Cardiac septum (tissue), 1 donor: ENCODE measurements at regions of chr5 and their contacts with region 1.

Region 1: GRCh38 chr5:91162534-91163381 is 220.4 kb downstream of the ARRDC3 start:
- DNase-seq: peak; percentile 91

Region 2: DNA sequence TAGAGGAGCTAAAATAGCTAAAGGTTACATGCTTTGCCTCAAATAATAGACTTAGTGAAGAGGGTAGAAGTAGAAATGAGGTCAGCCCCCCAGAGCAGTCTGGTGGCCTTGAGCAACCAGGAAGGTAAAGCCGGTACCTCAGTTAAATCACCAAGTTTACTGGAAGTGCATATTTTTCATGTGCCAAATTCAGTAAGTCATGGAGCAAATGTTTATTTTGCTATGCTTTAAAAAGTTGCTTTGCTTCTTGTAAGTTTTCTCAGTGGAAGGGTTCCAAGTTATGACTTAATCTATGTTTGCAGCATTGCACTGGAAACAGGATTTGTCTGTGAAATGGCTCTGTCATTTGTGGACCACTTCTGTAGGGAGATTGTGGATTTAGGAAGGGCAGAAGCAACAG is 36.3 kb before region 1 on chr5:
- intact Hi-C with region 1: loop called (anchors 5 kb)
- DNase-seq: no peak

Region 3: DNA sequence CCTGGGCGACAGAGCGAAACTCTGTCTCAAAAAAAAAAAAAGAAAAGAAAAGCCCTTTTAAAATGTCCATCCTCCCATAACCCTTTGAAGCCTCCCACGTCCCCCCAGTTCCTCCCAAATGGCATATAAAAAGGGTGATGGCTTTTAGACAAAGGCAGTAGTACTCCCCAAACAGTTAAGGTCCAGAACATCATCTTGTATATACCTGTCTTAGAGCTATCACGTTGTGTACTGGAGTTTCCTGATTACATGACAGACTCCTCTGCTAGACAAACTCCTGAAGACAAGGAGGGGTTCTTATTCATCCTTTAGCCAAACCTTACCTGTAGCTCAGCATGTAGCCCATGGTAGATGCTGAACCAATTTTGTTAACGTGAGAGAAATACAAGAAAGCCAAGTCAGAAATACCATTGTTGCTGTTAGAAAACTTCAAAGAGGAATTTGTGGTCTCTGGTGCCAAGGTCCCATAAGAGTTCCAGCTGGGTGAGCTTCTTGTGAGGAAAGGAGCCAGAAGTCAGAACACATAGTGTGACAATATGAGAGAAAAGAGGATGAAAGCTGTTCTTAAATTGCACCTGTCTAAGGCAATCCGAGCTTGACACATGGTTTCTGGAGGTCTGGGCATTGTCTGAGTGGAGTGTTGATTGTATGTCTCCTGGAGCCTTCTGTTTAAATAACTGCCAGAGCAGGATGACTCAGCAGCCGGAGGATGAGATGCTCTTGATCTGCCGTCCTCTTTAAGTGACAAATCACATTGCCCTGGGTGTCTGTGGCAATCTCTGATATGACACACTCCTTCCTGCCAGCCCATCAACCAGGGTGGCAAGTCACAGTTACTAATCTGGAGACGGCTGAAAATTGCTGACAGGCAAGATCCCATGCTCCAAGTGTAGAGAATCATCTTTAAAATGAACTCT is 151.3 kb after region 1 on chr5:
- intact Hi-C with region 1: no loop called
- DNase-seq: peak; percentile 93